ENCODE measurements at regions of chr19 and their contacts with region 1.

Region 1: GRCh38 chr19:12983542-12984142 is 11.6 kb upstream of the NFIX start:
- DNase-seq: no peak
- H3K4me3 ChIP-seq: peak overlapping the region; percentile 41 to 48 (median 44)
- H3K27ac ChIP-seq: no peak overlapping the region
- H3K4me1 ChIP-seq: peaks cover 12 to 30% (median 27%) of the 10 kb centered on the region in 4 donors
- H3K27me3 ChIP-seq: no peaks in the 10 kb centered on the region
- CTCF ChIP-seq: peak; percentile 98 to 99 (median 99)
- EP300 ChIP-seq: no peak
- POLR2A ChIP-seq: no peak

Region 2: GRCh38 chr19:13022859-13023636 is 39.4 kb after region 1 on chr19:
- intact Hi-C with region 1: no loop called
- DNase-seq: peak; percentile 95
- H3K4me3 ChIP-seq: peak overlapping the region; percentile 48 to 53 (median 51)
- H3K27ac ChIP-seq: peak overlapping the region; percentile 88 to 97 (median 94)
- H3K4me1 ChIP-seq: peaks cover 78 to 100% (median 99%) of the 10 kb centered on the region in 4 donors
- H3K27me3 ChIP-seq: no peaks in the 10 kb centered on the region
- CTCF ChIP-seq: peak in 1 of 3 experiments; percentile 9
- EP300 ChIP-seq: no peak
- POLR2A ChIP-seq: no peak

Region 3: GRCh38 chr19:13033819-13034611 is 50.4 kb after region 1 on chr19:
- intact Hi-C with region 1: loop called (anchors 5 kb)
- DNase-seq: no peak
- H3K4me3 ChIP-seq: no peak overlapping the region
- H3K27ac ChIP-seq: peak overlapping the region; percentile 85 to 88 (median 87)
- H3K4me1 ChIP-seq: peaks cover 91 to 100% (median 99%) of the 10 kb centered on the region in 4 donors
- H3K27me3 ChIP-seq: no peaks in the 10 kb centered on the region
- CTCF ChIP-seq: peak; percentile 68 to 84 (median 80)
- EP300 ChIP-seq: no peak
- POLR2A ChIP-seq: no peak

Region 4: GRCh38 chr19:13060964-13061927 is 77.6 kb after region 1 on chr19:
- intact Hi-C with region 1: loop called (anchors 1 kb)
- DNase-seq: no peak
- H3K4me3 ChIP-seq: peak overlapping the region; percentile 43 to 57 (median 50)
- H3K27ac ChIP-seq: peak overlapping the region; percentile 97 to 98 (median 98)
- H3K4me1 ChIP-seq: peaks cover 99 to 100% (median 100%) of the 10 kb centered on the region in 4 donors
- H3K27me3 ChIP-seq: no peaks in the 10 kb centered on the region
- CTCF ChIP-seq: peak; percentile 96 to 98 (median 97)
- EP300 ChIP-seq: no peak
- POLR2A ChIP-seq: no peak

Region 5: DNA sequence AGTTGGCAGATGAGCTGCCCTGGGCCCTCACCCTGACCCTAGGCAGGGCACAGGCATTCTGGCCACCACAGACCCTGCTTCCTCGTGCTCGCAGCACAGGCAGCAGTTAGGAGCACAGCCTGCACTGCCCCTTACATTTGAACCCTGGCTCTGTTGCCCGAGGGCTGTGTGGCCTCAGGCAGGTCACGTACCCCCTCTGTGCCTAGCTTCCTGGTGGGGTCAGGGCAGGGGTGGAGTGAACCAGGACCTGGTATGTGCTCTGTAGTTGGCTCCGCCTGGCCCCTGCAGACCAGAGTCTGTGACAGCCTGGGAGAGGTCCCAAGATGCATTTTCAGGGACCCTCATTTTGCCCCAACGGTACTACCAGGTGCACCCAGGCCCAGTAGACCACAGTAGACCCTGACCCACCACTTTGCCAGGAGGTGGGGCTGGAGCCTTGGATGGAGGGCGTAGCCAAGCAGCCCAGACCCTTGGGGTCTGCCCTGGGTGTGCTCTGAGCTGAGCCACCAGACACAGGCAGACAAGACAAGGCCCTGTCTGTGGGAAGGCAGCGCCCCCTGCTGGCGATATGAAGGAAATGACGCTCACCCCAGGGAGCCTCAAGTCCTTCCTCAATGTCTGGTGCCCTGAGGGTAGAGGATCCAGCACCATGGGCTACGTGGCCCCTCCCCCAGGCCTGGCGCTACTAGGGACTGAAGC is 109.9 kb after region 1 on chr19:
- intact Hi-C with region 1: loop called (anchors 1 kb)
- DNase-seq: no peak
- H3K4me3 ChIP-seq: no peak overlapping the region
- H3K27ac ChIP-seq: peak overlapping the region; percentile 79 to 90 (median 86)
- H3K4me1 ChIP-seq: peaks cover 67 to 97% (median 94%) of the 10 kb centered on the region in 4 donors
- H3K27me3 ChIP-seq: peaks cover 0 to 8% (median 0%) of the 10 kb centered on the region in 4 donors
- CTCF ChIP-seq: peak; percentile 94 to 97 (median 97)
- EP300 ChIP-seq: no peak
- POLR2A ChIP-seq: no peak

Measured in esophagus muscularis mucosa (tissue), 4 donors.